Activated CD4-positive, alpha-beta T cell treated with anti-CD3 and anti-CD28 coated beads for 36 hours (primary cell): ENCODE measurements at regions of chr10 and their contacts with region 1.

Region 1: GRCh38 chr10:57338823-57339558 is 928.7 kb downstream of the IPMK start:
- DNase-seq: no peak
- ATAC-seq: no peak
- H3K4me3 Mint-ChIP-seq: no peak overlapping the region
- H3K27ac Mint-ChIP-seq: no peak overlapping the region
- H3K4me1 Mint-ChIP-seq: no peaks in the 10 kb centered on the region
- H3K27me3 Mint-ChIP-seq: no peaks in the 10 kb centered on the region

Region 2: DNA sequence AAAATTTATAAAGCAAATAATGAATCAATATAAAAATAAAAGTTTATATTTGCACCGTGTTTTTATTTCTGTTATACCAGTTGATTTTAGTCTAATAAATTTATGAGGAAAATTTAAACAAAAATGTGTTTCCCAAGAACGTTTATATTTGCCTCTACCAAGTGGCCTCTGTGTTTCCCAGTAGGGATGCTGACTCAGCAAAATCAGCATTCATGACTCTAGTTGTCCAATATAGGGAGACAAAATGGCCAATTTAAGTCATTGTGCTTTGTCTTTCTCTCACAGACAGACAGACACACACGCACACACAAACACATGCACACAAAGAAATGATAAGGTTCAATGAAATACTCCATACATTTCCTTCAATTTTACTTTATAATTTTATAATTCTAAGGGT is 35.4 kb before region 1 on chr10:
- CTCF ChIA-PET with region 1: no interaction called
- POLR2A ChIA-PET with region 1: no interaction called
- intact Hi-C with region 1: no loop called
- DNase-seq: no peak
- ATAC-seq: no peak
- H3K4me3 Mint-ChIP-seq: no peak overlapping the region
- H3K27ac Mint-ChIP-seq: no peak overlapping the region
- H3K4me1 Mint-ChIP-seq: no peaks in the 10 kb centered on the region
- H3K27me3 Mint-ChIP-seq: no peaks in the 10 kb centered on the region

Region 3: DNA sequence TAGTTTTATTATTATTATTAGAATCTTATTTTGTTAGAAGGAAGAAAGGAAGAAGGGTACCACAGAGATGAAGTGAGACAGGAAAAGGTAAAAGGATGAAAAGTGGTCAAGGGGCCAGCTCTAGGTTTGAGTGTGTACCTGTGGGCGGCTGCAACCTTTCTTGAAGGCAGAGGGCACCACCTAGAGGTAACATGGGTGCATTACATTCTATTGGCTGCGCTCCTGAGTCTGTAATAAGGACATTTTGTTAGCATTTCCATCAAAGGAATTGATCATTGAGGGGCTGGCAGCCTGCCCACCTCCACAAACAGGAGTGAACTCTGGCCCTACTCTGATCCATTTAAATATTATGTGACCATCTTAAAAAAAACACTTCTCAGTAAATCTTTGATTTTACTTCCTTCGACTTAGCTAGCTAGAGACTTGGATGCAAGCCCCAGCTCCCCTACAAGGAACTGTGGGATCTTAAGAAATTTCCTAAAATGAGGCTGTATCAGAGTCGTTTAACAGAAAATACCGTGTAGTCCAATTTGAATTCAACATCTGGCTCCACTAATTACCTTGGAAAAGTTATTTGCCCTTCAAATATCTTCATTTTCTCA is 318.3 kb after region 1 on chr10:
- CTCF ChIA-PET with region 1: interaction called, 5 read pairs
- POLR2A ChIA-PET with region 1: no interaction called
- intact Hi-C with region 1: loop called (anchors 1 kb)
- DNase-seq: peak; percentile 51
- ATAC-seq: peak; percentile 47
- H3K4me3 Mint-ChIP-seq: no peak overlapping the region
- H3K27ac Mint-ChIP-seq: no peak overlapping the region
- H3K4me1 Mint-ChIP-seq: no peaks in the 10 kb centered on the region
- H3K27me3 Mint-ChIP-seq: no peaks in the 10 kb centered on the region

Region 4: DNA sequence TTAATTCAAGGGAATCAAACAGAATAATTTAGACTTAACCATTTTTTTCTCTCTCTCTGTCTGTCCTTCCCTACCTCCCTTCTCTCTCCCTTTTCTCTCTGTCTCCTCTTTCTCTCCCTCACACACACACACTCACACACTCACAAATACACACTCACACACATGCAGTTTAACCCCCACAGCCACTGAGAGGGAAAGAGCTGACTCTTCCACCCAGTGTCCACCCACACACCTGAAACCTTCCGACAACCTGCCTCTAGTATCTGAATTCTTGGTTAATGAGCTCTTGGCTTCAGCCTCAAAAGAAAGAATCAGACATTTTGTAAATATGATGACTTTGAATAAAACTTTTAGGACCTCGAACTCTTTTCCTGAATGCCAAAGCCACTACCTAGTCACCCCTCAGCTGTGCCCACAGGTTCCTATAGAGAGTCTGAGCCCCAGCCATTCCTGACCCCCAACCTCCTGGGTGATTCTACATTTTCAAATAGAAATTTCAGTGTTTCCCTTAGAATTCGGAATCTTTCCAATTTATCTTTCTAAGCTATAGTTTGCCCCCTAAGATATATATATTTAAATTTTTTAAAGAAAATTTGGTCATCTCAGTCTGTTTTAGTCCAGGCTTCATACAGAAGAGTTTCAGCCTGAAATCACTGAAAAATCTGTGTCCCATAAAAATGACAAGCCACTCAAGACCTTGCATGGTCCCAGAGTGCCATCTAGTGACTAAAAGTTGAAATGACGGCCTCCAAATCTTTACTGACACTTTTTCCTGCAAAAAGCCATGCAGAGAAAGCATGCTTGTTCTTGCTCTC is 725.9 kb after region 1 on chr10:
- CTCF ChIA-PET with region 1: interaction called, 3 read pairs
- POLR2A ChIA-PET with region 1: no interaction called
- intact Hi-C with region 1: loop called (anchors 1 to 10 kb)
- DNase-seq: peak; percentile 11
- ATAC-seq: no peak
- H3K4me3 Mint-ChIP-seq: no peak overlapping the region
- H3K27ac Mint-ChIP-seq: no peak overlapping the region
- H3K4me1 Mint-ChIP-seq: peaks cover 3% of the 10 kb centered on the region
- H3K27me3 Mint-ChIP-seq: peaks cover 20% of the 10 kb centered on the region

Region 5: DNA sequence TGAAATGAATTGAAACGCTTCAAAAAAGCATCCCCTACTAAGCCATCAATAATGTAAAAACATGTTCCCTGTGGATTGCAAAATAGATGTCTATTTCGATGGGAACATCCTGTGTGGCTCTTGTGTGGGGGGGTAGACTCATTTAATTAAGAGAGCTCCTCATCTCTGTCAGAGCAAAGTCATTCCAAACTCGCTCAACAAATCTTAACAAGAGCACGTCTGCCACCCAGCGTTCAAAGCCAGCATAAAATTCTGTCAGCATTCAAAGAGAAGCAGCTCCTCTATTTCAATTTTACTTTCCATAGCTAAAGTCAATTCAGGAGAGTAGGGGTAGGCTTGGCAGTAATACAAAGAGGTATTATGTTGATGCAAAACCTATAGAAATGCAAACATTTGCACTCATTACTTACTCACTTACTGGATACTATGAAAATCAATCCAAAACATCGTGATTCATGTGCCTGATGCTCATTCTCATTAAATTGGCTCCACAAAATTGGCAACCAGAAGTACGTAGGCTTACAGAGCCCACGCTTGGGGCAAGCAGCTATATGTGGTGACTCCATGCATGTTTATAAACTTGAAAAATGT is 813.8 kb after region 1 on chr10:
- CTCF ChIA-PET with region 1: interaction called, 7 read pairs
- POLR2A ChIA-PET with region 1: no interaction called
- intact Hi-C with region 1: loop called (anchors 1 to 10 kb)
- DNase-seq: peak; percentile 70
- ATAC-seq: peak; percentile 55
- H3K4me3 Mint-ChIP-seq: no peak overlapping the region
- H3K27ac Mint-ChIP-seq: no peak overlapping the region
- H3K4me1 Mint-ChIP-seq: no peaks in the 10 kb centered on the region
- H3K27me3 Mint-ChIP-seq: peaks cover 21% of the 10 kb centered on the region

Region 6: DNA sequence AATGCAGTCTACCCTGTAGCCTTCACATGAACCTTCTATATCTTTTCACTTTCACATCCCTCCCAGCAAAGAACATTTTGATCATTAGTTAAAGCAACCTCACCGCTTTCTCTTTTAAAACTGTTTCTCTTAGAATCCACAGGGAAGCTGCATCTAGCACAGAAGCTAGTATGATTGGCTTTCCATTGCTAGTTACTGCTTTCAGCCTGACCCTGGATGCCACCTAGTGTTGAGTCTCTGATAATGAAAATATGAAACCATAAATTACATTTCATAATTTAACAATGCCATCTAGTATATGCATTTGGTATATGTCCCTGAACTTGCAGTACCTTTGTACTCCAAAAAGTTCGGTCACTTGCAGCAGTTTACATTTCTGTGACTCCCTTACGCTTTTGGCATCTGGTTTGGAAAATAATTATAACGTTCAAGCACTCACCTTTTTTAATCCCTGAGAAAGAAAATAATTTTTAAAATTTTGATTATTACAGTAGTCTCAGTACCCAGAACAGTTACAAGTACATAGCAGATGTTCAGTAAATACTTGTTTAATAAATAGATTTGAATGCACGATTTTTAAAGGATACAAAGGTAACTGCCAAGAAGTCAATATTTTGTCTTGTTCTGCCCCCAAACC is 952.7 kb after region 1 on chr10:
- CTCF ChIA-PET with region 1: no interaction called
- POLR2A ChIA-PET with region 1: no interaction called
- intact Hi-C with region 1: loop called (anchors 5 kb)
- DNase-seq: peak; percentile 50
- ATAC-seq: peak; percentile 71
- H3K4me3 Mint-ChIP-seq: no peak overlapping the region
- H3K27ac Mint-ChIP-seq: no peak overlapping the region
- H3K4me1 Mint-ChIP-seq: no peaks in the 10 kb centered on the region
- H3K27me3 Mint-ChIP-seq: no peaks in the 10 kb centered on the region